WTC11 (cell line): ENCODE measurements at regions of chr14 and their contacts with region 1.

Region 1: GRCh38 chr14:72876710-72877063 is 17.2 kb downstream of the DPF3 start:
- DNase-seq: peak; percentile 45
- ATAC-seq: peak; percentile 94
- H3K4me3 Mint-ChIP-seq: no peak overlapping the region
- H3K27ac Mint-ChIP-seq: 0 out of 2 replicates have a peak overlapping the region, but pooled peaks have one; percentile 8
- H3K4me1 Mint-ChIP-seq: peaks cover 23% of the 10 kb centered on the region
- H3K27me3 Mint-ChIP-seq: peaks cover 10% of the 10 kb centered on the region
- CTCF ChIP-seq: no peak

Region 2: DNA sequence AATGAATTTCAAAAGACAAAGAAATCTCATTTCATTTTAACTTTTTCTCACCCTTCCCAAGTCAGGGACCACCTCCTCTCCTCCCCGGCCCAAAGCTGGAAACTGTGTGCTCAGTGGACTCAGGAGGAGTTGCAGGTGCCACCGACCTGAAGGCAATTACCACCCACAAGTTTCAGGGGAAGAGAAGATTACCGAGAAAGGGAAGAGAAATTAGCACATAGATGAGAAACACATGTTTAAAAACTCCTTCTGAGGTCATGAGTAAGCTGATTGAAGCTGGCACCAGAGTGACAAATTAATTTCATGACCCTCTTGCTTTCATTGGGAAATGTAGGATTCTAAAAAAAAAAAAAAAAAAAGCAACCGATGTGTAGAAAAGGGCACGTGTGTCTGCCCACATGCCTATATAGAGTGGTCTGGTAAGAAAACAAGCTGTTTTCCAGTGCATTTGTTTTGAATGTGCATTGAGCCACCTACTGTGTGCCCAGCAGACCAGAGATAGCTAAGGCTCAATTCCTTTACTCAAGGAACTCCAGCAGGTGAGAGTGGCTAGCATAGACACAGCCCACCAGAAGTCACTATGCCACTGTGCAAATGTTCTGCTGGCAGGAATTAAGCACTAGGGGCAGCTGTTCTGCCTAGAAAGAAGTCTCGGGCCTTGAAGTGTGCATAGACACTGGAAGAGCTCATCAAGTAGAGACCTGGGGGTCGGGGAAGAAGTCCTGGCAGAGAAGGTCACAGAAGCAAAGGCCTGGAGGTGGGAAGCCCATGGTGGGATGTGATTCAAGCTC is 13.3 kb before region 1 on chr14:
- CTCF ChIA-PET with region 1: no interaction called
- POLR2A ChIA-PET with region 1: no interaction called
- DNase-seq: no peak
- ATAC-seq: peak; percentile 26; the same call in 1 of the 2 replicates
- H3K4me3 Mint-ChIP-seq: no peak overlapping the region
- H3K27ac Mint-ChIP-seq: no peak overlapping the region
- H3K4me1 Mint-ChIP-seq: 0 out of 2 replicates have a peak, but pooled peaks cover 3% of the 10 kb centered on the region
- H3K27me3 Mint-ChIP-seq: no peaks in the 10 kb centered on the region
- CTCF ChIP-seq: no peak

Region 3: GRCh38 chr14:72888636-72889201 is 12.0 kb after region 1 on chr14:
- CTCF ChIA-PET with region 1: interaction called, 12 read pairs
- POLR2A ChIA-PET with region 1: interaction called, 3 read pairs
- DNase-seq: no peak
- ATAC-seq: no peak
- H3K4me3 Mint-ChIP-seq: no peak overlapping the region
- H3K27ac Mint-ChIP-seq: no peak overlapping the region
- H3K4me1 Mint-ChIP-seq: peaks cover 58% of the 10 kb centered on the region
- H3K27me3 Mint-ChIP-seq: peaks cover 41% of the 10 kb centered on the region
- CTCF ChIP-seq: no peak

Region 4: GRCh38 chr14:72893636-72894321 is 17.1 kb after region 1 on chr14 and contains the start of gene DPF3:
- CTCF ChIA-PET with region 1: interaction called, 12 read pairs
- POLR2A ChIA-PET with region 1: interaction called, 3 read pairs
- DNase-seq: peak; percentile 98
- ATAC-seq: peak; percentile 90
- H3K4me3 Mint-ChIP-seq: peak within 1 kb of the TSS; percentile 92
- H3K27ac Mint-ChIP-seq: no peak within 1 kb of the TSS
- H3K4me1 Mint-ChIP-seq: peaks cover 40% of the 10 kb centered on the region
- H3K27me3 Mint-ChIP-seq: peaks cover 85% of the 10 kb centered on the region
- CTCF ChIP-seq: no peak
- total RNA-seq, gene DPF3: 0.31 to 0.53 TPM (median 0.32 TPM) in 3 replicates

Region 5: GRCh38 chr14:73069585-73069984 is 192.9 kb after region 1 on chr14:
- CTCF ChIA-PET with region 1: no interaction called
- POLR2A ChIA-PET with region 1: no interaction called
- DNase-seq: no peak
- ATAC-seq: no peak
- H3K4me3 Mint-ChIP-seq: no peak overlapping the region
- H3K27ac Mint-ChIP-seq: no peak overlapping the region
- H3K4me1 Mint-ChIP-seq: peaks cover 18% of the 10 kb centered on the region
- H3K27me3 Mint-ChIP-seq: no peaks in the 10 kb centered on the region
- CTCF ChIP-seq: no peak